ENCODE measurements at regions of chr15 and their contacts with region 1.

Region 1: DNA sequence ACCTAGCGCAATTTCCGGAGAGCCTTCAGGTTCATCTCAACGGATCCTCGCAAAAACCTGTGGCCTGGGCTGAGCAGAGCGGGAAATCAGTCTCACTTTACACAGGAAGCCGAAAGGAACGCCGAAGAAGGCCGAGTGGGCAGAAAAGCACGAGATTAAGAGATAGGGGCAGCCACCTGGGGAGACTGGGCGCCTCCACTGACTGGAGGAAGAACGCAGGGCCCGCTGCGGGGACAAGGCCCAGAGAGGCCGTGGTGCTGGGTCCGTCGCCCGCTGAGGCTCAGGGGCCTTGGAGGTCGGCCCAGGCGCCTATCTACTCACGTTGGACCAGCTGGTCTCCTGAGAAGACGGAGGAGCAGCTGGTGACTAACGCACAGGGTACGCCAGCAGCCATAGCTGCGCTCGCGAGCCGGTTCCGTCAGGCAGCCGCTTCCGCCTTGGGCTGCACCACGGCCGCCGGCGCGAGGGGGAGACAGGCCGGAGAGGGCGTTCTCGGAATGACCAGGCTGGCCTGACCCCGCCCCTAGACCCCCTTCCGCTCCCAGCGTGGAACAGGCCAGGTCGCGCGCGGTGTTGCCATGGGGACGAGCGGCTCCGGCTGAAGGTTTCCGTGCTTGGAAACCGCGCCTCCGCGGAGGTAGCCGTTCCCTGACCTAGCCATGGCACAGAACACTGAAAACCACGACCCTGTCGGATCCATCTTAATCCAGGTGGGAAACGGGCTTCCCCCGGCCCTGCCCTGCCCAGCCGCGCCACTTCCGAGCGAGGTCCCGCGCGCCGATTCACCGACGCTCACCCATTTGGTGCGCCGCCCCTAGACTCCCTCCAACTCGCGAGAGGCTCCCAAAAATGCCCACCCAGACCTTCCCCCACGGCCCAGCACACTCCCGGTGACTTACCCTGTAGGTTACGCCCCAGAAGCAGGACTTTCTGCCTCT is at the starts of genes AAGAB and IQCH:
- DNase-seq: peak; percentile 98
- ATAC-seq: peak; percentile 93
- H3K4me3 Mint-ChIP-seq: peak within 1 kb of the TSS; percentile 100
- H3K27ac Mint-ChIP-seq: peak within 1 kb of the TSS; percentile 99
- H3K4me1 Mint-ChIP-seq: peaks cover 37% of the 10 kb centered on the region
- H3K27me3 Mint-ChIP-seq: no peaks in the 10 kb centered on the region
- total RNA-seq, gene AAGAB: 43.9 to 48.6 TPM
- total RNA-seq, gene IQCH: 1.8 to 2.1 TPM

Region 2: DNA sequence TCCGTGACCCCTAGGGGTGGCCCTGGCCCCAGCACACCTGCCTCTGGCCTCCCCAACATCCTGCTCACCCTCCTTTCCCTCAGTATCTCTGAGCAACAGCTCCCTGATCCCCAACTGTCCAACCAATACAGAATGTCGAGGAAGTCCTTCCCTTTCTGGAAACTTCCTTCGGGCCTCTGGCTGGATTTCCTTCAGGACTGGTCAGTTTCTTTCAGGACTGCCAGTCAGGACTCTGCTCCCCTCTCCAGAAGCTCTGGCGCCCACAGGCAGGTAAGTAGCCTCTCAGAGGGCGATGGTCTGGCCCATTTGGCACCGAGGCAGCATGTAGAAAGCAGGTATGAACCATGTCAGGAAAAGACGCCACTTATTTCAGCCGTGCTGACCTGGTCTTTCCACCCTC is 1052.0 kb before region 1 on chr15:
- CTCF ChIA-PET with region 1: no interaction called
- POLR2A ChIA-PET with region 1: no interaction called
- intact Hi-C with region 1: no loop called
- DNase-seq: no peak
- ATAC-seq: no peak
- H3K4me3 Mint-ChIP-seq: no peak overlapping the region
- H3K27ac Mint-ChIP-seq: no peak overlapping the region
- H3K4me1 Mint-ChIP-seq: no peaks in the 10 kb centered on the region
- H3K27me3 Mint-ChIP-seq: peaks cover 8% of the 10 kb centered on the region

Region 3: GRCh38 chr15:66646308-66646707 is 608.2 kb before region 1 on chr15:
- CTCF ChIA-PET with region 1: no interaction called
- POLR2A ChIA-PET with region 1: no interaction called
- intact Hi-C with region 1: no loop called
- DNase-seq: no peak
- ATAC-seq: no peak
- H3K4me3 Mint-ChIP-seq: no peak overlapping the region
- H3K27ac Mint-ChIP-seq: no peak overlapping the region
- H3K4me1 Mint-ChIP-seq: no peaks in the 10 kb centered on the region
- H3K27me3 Mint-ChIP-seq: no peaks in the 10 kb centered on the region

Region 4: GRCh38 chr15:67311731-67312130 is 57.2 kb after region 1 on chr15:
- CTCF ChIA-PET with region 1: no interaction called
- POLR2A ChIA-PET with region 1: no interaction called
- intact Hi-C with region 1: no loop called
- DNase-seq: no peak
- ATAC-seq: no peak
- H3K4me3 Mint-ChIP-seq: no peak overlapping the region
- H3K27ac Mint-ChIP-seq: no peak overlapping the region
- H3K4me1 Mint-ChIP-seq: peaks cover 12% of the 10 kb centered on the region
- H3K27me3 Mint-ChIP-seq: peaks cover 4% of the 10 kb centered on the region

Region 5: DNA sequence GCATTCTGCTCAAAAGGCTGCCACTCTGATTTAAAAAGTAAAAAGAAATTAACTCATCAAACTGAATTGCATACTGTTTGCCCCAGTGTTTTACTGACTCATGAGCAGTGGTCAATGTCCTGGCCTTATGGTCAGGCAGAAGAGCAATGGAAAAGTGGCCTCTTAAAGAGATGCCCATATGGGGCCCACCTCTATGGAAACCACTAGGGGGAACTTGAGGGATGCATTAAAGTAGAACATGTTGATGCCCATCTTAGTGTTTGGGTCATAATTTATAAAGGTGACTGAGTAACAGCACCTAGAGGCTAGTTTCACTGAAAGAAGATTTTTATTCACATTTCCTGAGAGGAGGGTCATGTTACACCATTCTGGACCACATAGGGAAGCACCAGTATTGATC is 651.9 kb after region 1 on chr15:
- CTCF ChIA-PET with region 1: no interaction called
- POLR2A ChIA-PET with region 1: no interaction called
- intact Hi-C with region 1: no loop called
- DNase-seq: no peak
- ATAC-seq: no peak
- H3K4me3 Mint-ChIP-seq: no peak overlapping the region
- H3K27ac Mint-ChIP-seq: no peak overlapping the region
- H3K4me1 Mint-ChIP-seq: no peaks in the 10 kb centered on the region
- H3K27me3 Mint-ChIP-seq: peaks cover 4% of the 10 kb centered on the region

Region 6: DNA sequence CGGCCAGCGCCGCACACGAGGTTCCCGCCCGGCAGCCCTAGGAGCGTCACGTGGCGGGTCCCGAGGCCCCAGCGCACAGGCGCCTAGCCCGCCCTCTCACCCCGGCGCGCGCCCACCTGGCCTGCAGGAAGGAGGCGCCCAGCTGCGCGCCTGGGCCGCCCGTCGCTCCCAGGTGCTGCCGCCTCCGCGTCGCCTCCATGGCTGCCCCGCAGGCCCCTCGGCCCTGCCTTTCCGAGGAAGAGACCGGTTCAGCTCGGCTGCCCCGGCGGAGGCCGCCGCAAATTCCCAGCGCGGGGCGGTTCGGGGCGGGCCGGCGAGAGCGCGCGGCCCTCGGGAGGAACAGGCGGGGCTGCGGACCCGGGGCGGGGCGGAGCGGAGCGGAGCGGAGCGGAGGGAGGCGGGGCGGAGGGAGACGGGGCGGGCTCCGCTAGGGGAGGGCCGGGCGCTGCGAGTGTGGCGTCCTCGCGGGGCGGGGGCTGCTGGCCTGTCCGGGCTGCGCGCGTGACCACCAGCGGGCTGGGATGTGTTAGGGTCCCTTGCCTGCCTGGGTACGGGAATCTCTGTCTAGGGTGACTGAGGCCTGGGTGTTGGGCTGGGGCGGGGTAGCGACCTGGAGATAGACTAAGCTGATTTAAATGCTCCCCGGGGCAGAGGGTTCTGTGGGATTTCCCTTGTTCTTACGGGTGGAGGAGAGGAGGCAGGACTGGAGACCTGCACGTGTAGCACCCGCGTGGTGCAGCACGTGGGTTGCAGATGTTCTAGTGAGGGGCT is 975.1 kb after region 1 on chr15 and contains the start of gene CLN6:
- CTCF ChIA-PET with region 1: no interaction called
- POLR2A ChIA-PET with region 1: interaction called, 10 read pairs
- intact Hi-C with region 1: no loop called
- DNase-seq: peak; percentile 88
- ATAC-seq: peak; percentile 88
- H3K4me3 Mint-ChIP-seq: peak within 1 kb of the TSS; percentile 99
- H3K27ac Mint-ChIP-seq: peak within 1 kb of the TSS; percentile 95
- H3K4me1 Mint-ChIP-seq: peaks cover 47% of the 10 kb centered on the region
- H3K27me3 Mint-ChIP-seq: no peaks in the 10 kb centered on the region
- total RNA-seq, gene CLN6: 45.1 to 48.2 TPM

Measured in activated CD4-positive, alpha-beta T cell treated with anti-CD3 and anti-CD28 coated beads for 36 hours (primary cell).